Activated CD4-positive, alpha-beta memory T cell treated with anti-CD3 and anti-CD28 coated beads, Interleukin-2, amount 10 ng/mL, durations not matched to agents 7 days and 5 days (primary cell): ENCODE measurements at regions of chr3 and their contacts with region 1.

Region 1: GRCh38 chr3:149536429-149536828 is 61.9 kb downstream of the TM4SF4 start:
- DNase-seq: no peak
- H3K4me3 Mint-ChIP-seq: no peak overlapping the region
- H3K27ac Mint-ChIP-seq: no peak overlapping the region
- H3K4me1 Mint-ChIP-seq: peaks cover 4% of the 10 kb centered on the region
- H3K27me3 Mint-ChIP-seq: peaks cover 3% of the 10 kb centered on the region

Region 2: GRCh38 chr3:149717391-149718056 is 181.1 kb after region 1 on chr3:
- CTCF ChIA-PET with region 1: interaction called, 11 read pairs
- POLR2A ChIA-PET with region 1: no interaction called
- DNase-seq: peak; percentile 34
- H3K4me3 Mint-ChIP-seq: no peak overlapping the region
- H3K27ac Mint-ChIP-seq: no peak overlapping the region
- H3K4me1 Mint-ChIP-seq: peaks cover 10% of the 10 kb centered on the region
- H3K27me3 Mint-ChIP-seq: no peaks in the 10 kb centered on the region

Region 3: GRCh38 chr3:149771652-149772271 is 235.3 kb after region 1 on chr3:
- CTCF ChIA-PET with region 1: interaction called, 23 read pairs
- POLR2A ChIA-PET with region 1: no interaction called
- DNase-seq: peak; percentile 28
- H3K4me3 Mint-ChIP-seq: no peak overlapping the region
- H3K27ac Mint-ChIP-seq: no peak overlapping the region
- H3K4me1 Mint-ChIP-seq: no peaks in the 10 kb centered on the region
- H3K27me3 Mint-ChIP-seq: peaks cover 17% of the 10 kb centered on the region